ENCODE measurements at regions of chr3 and their contacts with region 1.

Region 1: GRCh38 chr3:52570076-52570475 is 33.7 kb downstream of the UQCC5 start:
- H3K4me3 Mint-ChIP-seq: no peak overlapping the region
- H3K27ac Mint-ChIP-seq: no peak overlapping the region
- H3K4me1 Mint-ChIP-seq: no peaks in the 10 kb centered on the region
- H3K27me3 Mint-ChIP-seq: no peaks in the 10 kb centered on the region

Region 2: GRCh38 chr3:52181543-52181942 is 388.5 kb before region 1 on chr3:
- intact Hi-C with region 1: no loop called
- H3K4me3 Mint-ChIP-seq: no peak overlapping the region
- H3K27ac Mint-ChIP-seq: no peak overlapping the region
- H3K4me1 Mint-ChIP-seq: peaks cover 54% of the 10 kb centered on the region
- H3K27me3 Mint-ChIP-seq: peaks cover 3% of the 10 kb centered on the region

Region 3: DNA sequence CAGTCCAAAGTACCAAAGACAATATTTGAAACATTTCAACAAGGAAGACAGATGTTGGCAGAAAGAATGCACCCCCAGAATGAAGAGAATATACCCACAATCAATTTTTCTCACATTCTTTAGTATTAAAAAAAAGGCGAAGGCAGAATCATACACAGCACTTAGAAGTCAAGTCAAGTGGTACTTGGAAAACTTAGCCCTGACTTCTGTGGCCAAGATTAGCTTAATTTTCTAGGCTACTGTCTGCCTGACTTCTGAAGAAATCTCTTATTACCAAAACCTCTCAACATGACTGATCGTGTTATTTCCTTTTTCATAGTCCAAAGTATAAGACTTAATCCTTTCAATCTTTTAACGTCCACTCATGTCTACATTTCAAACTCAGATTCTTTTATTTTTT is 55.0 kb after region 1 on chr3:
- intact Hi-C with region 1: loop called (anchors 5 kb)
- H3K4me3 Mint-ChIP-seq: no peak overlapping the region
- H3K27ac Mint-ChIP-seq: no peak overlapping the region
- H3K4me1 Mint-ChIP-seq: no peaks in the 10 kb centered on the region
- H3K27me3 Mint-ChIP-seq: no peaks in the 10 kb centered on the region